ENCODE measurements at regions of chr3 and their contacts with region 1.

Region 1: GRCh38 chr3:188954590-188955208 is 217.1 kb upstream of the TPRG1 start:
- DNase-seq: peak; percentile 90
- ATAC-seq: peak; percentile 61
- H3K4me3 Mint-ChIP-seq: no peak overlapping the region
- H3K27ac Mint-ChIP-seq: no peak overlapping the region
- H3K4me1 Mint-ChIP-seq: peaks cover 46% of the 10 kb centered on the region
- H3K27me3 Mint-ChIP-seq: no peaks in the 10 kb centered on the region

Region 2: GRCh38 chr3:187490366-187490765 is 1464.3 kb before region 1 on chr3:
- CTCF ChIA-PET with region 1: no interaction called
- POLR2A ChIA-PET with region 1: no interaction called
- intact Hi-C with region 1: no loop called
- DNase-seq: no peak
- ATAC-seq: no peak
- H3K4me3 Mint-ChIP-seq: no peak overlapping the region
- H3K27ac Mint-ChIP-seq: no peak overlapping the region
- H3K4me1 Mint-ChIP-seq: no peaks in the 10 kb centered on the region
- H3K27me3 Mint-ChIP-seq: peaks cover 28% of the 10 kb centered on the region

Region 3: DNA sequence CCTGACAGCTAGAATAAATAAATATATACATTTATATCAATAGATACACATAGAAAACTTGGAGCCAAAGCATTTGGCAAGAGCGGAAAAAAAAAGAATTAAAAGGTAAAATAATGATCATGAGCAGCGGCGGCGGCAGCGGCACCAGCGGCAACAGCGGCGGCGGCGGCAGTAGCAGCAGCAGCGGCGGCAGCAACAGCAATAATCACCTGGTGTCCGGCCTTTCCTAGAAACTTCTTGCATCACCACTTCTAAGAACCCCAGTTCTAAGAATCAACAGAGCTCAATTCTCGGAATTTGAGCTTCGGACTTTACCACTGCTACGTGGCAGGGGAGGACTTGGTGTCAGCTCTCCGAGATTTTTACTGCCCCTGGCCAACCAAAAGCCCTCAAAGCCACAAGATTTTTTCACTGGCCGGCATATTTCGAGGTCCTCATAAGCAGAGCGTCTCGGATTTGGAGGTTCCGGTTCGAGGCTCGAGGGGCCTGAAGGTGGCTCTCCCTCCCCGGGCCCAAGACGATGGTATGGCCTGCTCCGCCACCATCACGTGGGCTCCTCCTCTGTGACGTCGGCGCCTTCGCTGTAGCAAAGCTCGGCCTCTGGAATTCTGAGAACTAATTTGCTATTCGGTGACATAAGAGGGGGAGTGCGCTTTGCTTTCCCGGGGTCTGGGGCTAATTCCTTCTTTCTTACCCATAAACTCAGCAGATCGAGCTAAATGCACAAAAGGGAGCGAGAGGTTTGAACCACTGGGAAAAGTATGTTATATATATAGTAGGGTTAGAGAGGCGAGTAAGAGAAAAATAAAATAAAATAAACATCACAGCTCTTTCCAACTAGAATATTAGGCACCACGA is 1209.3 kb before region 1 on chr3 and contains the start of gene BCL6:
- CTCF ChIA-PET with region 1: interaction called, 169 read pairs
- POLR2A ChIA-PET with region 1: interaction called, 6 read pairs
- intact Hi-C with region 1: loop called (anchors 1 kb)
- DNase-seq: peak; percentile 92
- ATAC-seq: peak; percentile 50
- H3K4me3 Mint-ChIP-seq: peak within 1 kb of the TSS; percentile 91
- H3K27ac Mint-ChIP-seq: peak within 1 kb of the TSS; percentile 99
- H3K4me1 Mint-ChIP-seq: peaks cover 63% of the 10 kb centered on the region
- H3K27me3 Mint-ChIP-seq: no peaks in the 10 kb centered on the region
- total RNA-seq, gene BCL6: 42.9 to 52.8 TPM

Region 4: DNA sequence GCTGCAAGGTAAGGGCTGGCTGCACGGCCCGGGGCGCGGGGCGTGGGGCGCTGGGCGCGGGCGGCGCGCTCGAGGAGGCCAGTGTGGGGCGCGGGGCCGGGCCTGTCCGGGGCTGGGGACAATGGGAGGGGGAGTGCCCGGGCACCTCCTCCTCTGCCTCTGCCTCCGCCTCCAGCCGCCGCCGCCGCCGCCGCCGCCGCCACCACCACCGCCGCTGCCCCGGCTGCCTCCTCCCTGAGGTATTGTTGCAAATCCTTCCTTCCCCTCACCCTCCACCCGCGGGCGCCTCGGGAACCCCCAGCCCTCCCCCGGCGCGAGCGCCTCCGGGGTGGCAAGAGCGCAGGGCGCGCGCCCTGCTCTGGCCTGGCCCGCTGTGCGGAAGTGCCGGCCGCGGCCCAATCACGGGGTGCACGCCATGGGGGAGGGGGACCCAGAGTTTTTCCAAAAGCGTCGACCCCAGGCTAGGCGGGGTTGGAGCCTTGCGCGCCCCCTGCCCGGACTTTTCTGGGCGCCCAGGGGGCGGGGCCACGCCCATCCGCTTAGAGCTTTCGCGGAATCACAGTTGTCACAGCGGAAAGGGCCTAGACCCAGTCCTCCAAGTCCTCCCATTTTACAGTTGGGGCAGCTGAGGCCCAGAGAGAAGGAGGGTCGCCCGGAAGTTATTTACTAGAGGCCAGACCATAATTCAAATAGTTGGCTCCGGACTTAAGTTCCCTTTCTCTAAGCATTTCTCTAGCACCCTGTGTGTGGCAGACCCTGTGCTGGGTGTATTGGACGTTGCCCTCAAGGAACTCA is 800.5 kb before region 1 on chr3 and contains the start of gene LPP:
- CTCF ChIA-PET with region 1: interaction called, 5 read pairs
- POLR2A ChIA-PET with region 1: no interaction called
- intact Hi-C with region 1: loop called in 1 of 2 experiments (anchors 10 kb)
- DNase-seq: peak; percentile 91
- ATAC-seq: peak; percentile 76
- H3K4me3 Mint-ChIP-seq: peak within 1 kb of the TSS; percentile 76
- H3K27ac Mint-ChIP-seq: peak within 1 kb of the TSS; percentile 95
- H3K4me1 Mint-ChIP-seq: peaks cover 64% of the 10 kb centered on the region
- H3K27me3 Mint-ChIP-seq: peaks cover 3% of the 10 kb centered on the region
- total RNA-seq, gene LPP: 34.7 to 40.6 TPM

Region 5: GRCh38 chr3:188389711-188390342 is 564.9 kb before region 1 on chr3:
- CTCF ChIA-PET with region 1: no interaction called
- POLR2A ChIA-PET with region 1: no interaction called
- intact Hi-C with region 1: loop called in 1 of 2 experiments (anchors 10 kb)
- DNase-seq: peak; percentile 81
- ATAC-seq: peak; percentile 92
- H3K4me3 Mint-ChIP-seq: peak overlapping the region; percentile 22
- H3K27ac Mint-ChIP-seq: peak overlapping the region; percentile 78
- H3K4me1 Mint-ChIP-seq: peaks cover 41% of the 10 kb centered on the region
- H3K27me3 Mint-ChIP-seq: no peaks in the 10 kb centered on the region

Region 6: GRCh38 chr3:188683032-188683521 is 271.6 kb before region 1 on chr3:
- CTCF ChIA-PET with region 1: no interaction called
- POLR2A ChIA-PET with region 1: no interaction called
- intact Hi-C with region 1: loop called in 1 of 2 experiments (anchors 5 kb)
- DNase-seq: peak; percentile 69
- ATAC-seq: peak; percentile 97
- H3K4me3 Mint-ChIP-seq: no peak overlapping the region
- H3K27ac Mint-ChIP-seq: no peak overlapping the region
- H3K4me1 Mint-ChIP-seq: peaks cover 41% of the 10 kb centered on the region
- H3K27me3 Mint-ChIP-seq: no peaks in the 10 kb centered on the region

Region 7: DNA sequence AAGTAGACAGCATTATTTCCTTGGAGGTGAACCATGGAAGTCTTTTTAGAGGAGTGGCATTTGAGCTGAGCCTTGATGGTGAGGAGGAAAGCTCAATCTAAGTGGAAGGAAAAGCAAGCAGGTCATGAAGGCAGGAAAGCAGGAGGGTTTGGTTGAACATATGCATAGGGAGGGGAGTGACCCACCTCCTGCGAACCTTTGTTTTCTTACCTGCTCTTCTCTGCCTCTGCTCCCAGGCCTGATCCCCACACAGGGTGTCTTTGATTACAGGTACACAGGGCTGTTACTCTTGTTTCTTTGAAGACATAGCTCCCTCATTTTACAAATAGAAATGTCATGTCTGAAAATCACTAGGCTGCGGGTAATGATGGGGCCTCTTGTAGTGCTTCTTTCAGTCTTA is 31.0 kb before region 1 on chr3:
- CTCF ChIA-PET with region 1: interaction called, 26 read pairs
- POLR2A ChIA-PET with region 1: no interaction called
- intact Hi-C with region 1: no loop called
- DNase-seq: no peak
- ATAC-seq: no peak
- H3K4me3 Mint-ChIP-seq: no peak overlapping the region
- H3K27ac Mint-ChIP-seq: no peak overlapping the region
- H3K4me1 Mint-ChIP-seq: peaks cover 1% of the 10 kb centered on the region
- H3K27me3 Mint-ChIP-seq: peaks cover 3% of the 10 kb centered on the region